Activated naive CD4-positive, alpha-beta T cell treated with anti-CD3 and anti-CD28 coated beads for 36 hours (primary cell): ENCODE measurements at regions of chr14 and their contacts with region 1.

Region 1: GRCh38 chr14:73503648-73504047 is 12.9 kb downstream of the RIOX1 start:
- DNase-seq: no peak
- H3K4me3 Mint-ChIP-seq: no peak overlapping the region
- H3K27ac Mint-ChIP-seq: no peak overlapping the region
- H3K4me1 Mint-ChIP-seq: no peaks in the 10 kb centered on the region
- H3K27me3 Mint-ChIP-seq: no peaks in the 10 kb centered on the region

Region 2: GRCh38 chr14:72962829-72963312 is 540.8 kb before region 1 on chr14:
- CTCF ChIA-PET with region 1: no interaction called
- intact Hi-C with region 1: no loop called
- DNase-seq: no peak
- H3K4me3 Mint-ChIP-seq: no peak overlapping the region
- H3K27ac Mint-ChIP-seq: no peak overlapping the region
- H3K4me1 Mint-ChIP-seq: no peaks in the 10 kb centered on the region
- H3K27me3 Mint-ChIP-seq: no peaks in the 10 kb centered on the region

Region 3: DNA sequence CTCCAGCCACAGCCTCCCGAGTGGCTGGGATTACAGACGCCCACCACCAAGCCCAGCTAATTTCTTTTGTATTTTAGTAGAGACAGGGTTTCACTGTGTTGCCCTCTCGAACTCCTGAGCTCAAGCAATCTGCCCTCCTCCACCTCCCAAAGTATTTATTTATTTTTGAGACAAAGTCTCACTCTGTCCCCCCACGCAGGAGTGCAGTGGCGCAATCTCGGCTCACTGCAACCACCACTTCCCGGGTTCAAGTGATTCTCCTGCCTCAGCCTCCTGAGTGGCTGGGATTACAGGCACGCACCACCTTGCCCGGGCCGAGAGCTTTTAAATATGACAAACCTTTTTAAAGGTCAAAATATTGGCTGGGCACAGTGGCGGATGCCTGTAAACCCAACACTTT is 59.9 kb before region 1 on chr14:
- CTCF ChIA-PET with region 1: no interaction called
- intact Hi-C with region 1: no loop called
- DNase-seq: no peak
- H3K4me3 Mint-ChIP-seq: no peak overlapping the region
- H3K27ac Mint-ChIP-seq: no peak overlapping the region
- H3K4me1 Mint-ChIP-seq: peaks cover 4% of the 10 kb centered on the region
- H3K27me3 Mint-ChIP-seq: no peaks in the 10 kb centered on the region

Region 4: GRCh38 chr14:73491256-73492042 is 12.2 kb before region 1 on chr14:
- CTCF ChIA-PET with region 1: interaction called, 21 read pairs
- intact Hi-C with region 1: no loop called
- DNase-seq: peak; percentile 74
- H3K4me3 Mint-ChIP-seq: peak overlapping the region; percentile 78
- H3K27ac Mint-ChIP-seq: no peak overlapping the region
- H3K4me1 Mint-ChIP-seq: peaks cover 42% of the 10 kb centered on the region
- H3K27me3 Mint-ChIP-seq: no peaks in the 10 kb centered on the region

Region 5: GRCh38 chr14:73521229-73521628 is 17.6 kb after region 1 on chr14:
- CTCF ChIA-PET with region 1: interaction called, 29 read pairs
- intact Hi-C with region 1: no loop called
- DNase-seq: no peak
- H3K4me3 Mint-ChIP-seq: no peak overlapping the region
- H3K27ac Mint-ChIP-seq: no peak overlapping the region
- H3K4me1 Mint-ChIP-seq: no peaks in the 10 kb centered on the region
- H3K27me3 Mint-ChIP-seq: no peaks in the 10 kb centered on the region

Region 6: GRCh38 chr14:73591690-73592448 is 88.2 kb after region 1 on chr14 and contains the start of gene ACOT4:
- CTCF ChIA-PET with region 1: interaction called, 10 read pairs
- intact Hi-C with region 1: no loop called
- DNase-seq: peak; percentile 42
- H3K4me3 Mint-ChIP-seq: peak within 1 kb of the TSS; percentile 68
- H3K27ac Mint-ChIP-seq: no peak within 1 kb of the TSS
- H3K4me1 Mint-ChIP-seq: peaks cover 7% of the 10 kb centered on the region
- H3K27me3 Mint-ChIP-seq: no peaks in the 10 kb centered on the region
- total RNA-seq, gene ACOT4: 1.4 to 1.7 TPM

Region 7: DNA sequence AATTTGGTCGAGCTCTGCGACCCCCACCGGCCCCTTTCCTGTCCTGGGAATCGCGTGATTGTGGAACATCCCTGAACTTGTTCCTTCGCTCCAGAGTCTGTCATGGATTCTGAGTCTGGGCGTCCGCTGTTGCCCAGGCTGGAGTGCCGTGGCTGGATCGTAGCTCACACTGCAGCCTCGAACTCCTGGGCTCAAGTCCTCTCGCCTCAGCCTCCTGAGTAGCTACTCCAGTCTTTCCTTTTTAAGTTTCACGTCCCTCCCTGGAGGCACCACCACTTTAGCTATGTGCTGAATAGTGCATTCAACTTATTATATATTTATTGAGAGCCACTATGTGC is 109.4 kb after region 1 on chr14:
- CTCF ChIA-PET with region 1: interaction called, 10 read pairs
- intact Hi-C with region 1: no loop called
- DNase-seq: no peak
- H3K4me3 Mint-ChIP-seq: peak overlapping the region; percentile 79
- H3K27ac Mint-ChIP-seq: no peak overlapping the region
- H3K4me1 Mint-ChIP-seq: peaks cover 3% of the 10 kb centered on the region
- H3K27me3 Mint-ChIP-seq: no peaks in the 10 kb centered on the region

Region 8: GRCh38 chr14:73633116-73634010 is 129.7 kb after region 1 on chr14:
- CTCF ChIA-PET with region 1: interaction called, 98 read pairs
- intact Hi-C with region 1: loop called (anchors 1 kb)
- DNase-seq: peak; percentile 74
- H3K4me3 Mint-ChIP-seq: peak overlapping the region; percentile 65
- H3K27ac Mint-ChIP-seq: no peak overlapping the region
- H3K4me1 Mint-ChIP-seq: peaks cover 5% of the 10 kb centered on the region
- H3K27me3 Mint-ChIP-seq: peaks cover 6% of the 10 kb centered on the region